ENCODE measurements at regions of chr9 and their contacts with region 1.

Region 1: GRCh38 chr9:38068866-38069629 is at the start of gene SHB:
- ATAC-seq: peak; percentile 47 to 80 (median 78)
- H3K4me3 ChIP-seq: peak within 1 kb of the TSS; percentile 58 to 67 (median 60)
- H3K27ac ChIP-seq: peak within 1 kb of the TSS; percentile 84 to 87
- H3K4me1 ChIP-seq: peaks cover 8 to 18% of the 10 kb centered on the region in 2 donors
- total RNA-seq, gene SHB: 2.8 to 12.8 (median 8.7) TPM

Region 2: DNA sequence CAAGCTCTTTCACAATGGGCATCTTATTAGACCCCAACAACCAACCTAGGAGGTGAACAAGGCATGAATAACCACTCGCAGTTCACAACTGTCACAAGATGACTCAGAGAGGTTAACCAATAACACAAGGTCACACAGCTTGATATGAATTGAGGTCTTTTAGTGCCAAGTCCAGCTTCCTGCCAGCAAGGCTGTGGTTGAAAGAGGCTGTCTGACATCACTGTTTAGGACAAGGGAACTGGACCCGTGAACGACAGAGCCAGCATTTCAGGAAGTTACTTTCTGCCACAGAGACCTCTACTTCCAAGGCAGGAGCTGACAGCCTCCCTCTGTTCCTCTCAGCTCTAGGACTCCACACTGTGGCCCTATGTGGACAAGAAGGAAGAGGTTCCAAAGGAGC is 270.0 kb after region 1 on chr9:
- in situ Hi-C with region 1: loop called in 1 of 9 experiments (anchors 25 kb)
- ATAC-seq: peak in 1 of 8 experiments; percentile 38
- H3K4me3 ChIP-seq: no peak overlapping the region
- H3K27ac ChIP-seq: no peak overlapping the region
- H3K4me1 ChIP-seq: peaks cover 7 to 27% of the 10 kb centered on the region in 2 donors